Activated CD4-positive, alpha-beta T cell treated with anti-CD3 and anti-CD28 coated beads, Interleukin-2, amount 10 ng/mL, durations not matched to agents 24 days and 14 days (primary cell): ENCODE measurements at regions of chr7 and their contacts with region 1.

Region 1: GRCh38 chr7:145036604-145037405 is 201.0 kb upstream of the TPK1 start:
- DNase-seq: peak; percentile 77
- H3K4me3 Mint-ChIP-seq: no peak overlapping the region
- H3K27ac Mint-ChIP-seq: no peak overlapping the region
- H3K4me1 Mint-ChIP-seq: peaks cover 2% of the 10 kb centered on the region
- H3K27me3 Mint-ChIP-seq: peaks cover 2% of the 10 kb centered on the region

Region 2: DNA sequence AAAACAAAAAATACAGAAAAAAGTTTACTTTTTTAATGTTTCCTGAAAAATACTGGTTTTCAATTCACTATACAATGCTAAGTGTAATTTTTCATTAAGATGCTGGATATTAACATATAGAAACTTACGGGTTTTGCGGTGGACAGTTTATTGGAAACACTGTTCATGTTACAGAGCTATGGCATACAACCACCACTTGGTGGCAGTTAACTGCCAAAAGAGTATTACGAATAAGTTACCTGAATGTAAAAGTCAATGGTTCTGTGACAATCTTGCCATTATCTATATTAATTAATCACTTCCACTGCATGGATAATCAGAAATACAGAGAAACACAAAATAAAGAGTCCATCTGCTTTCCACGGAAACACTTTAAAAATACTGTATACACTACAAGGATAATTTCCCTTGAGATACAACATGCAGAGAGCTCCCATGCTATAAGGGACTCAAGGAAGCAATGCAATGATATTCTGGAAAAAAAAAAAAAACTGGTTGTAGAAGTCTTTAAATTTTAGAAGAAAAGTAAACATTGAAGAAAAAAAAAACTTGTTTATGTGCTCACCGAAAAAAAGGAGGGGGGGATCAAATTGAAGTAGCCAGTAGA is 298.0 kb before region 1 on chr7:
- intact Hi-C with region 1: loop called (anchors 10 kb)
- DNase-seq: peak; percentile 72
- H3K4me3 Mint-ChIP-seq: no peak overlapping the region
- H3K27ac Mint-ChIP-seq: no peak overlapping the region
- H3K4me1 Mint-ChIP-seq: peaks cover 2% of the 10 kb centered on the region
- H3K27me3 Mint-ChIP-seq: no peaks in the 10 kb centered on the region

Region 3: GRCh38 chr7:146090023-146090645 is 1053.3 kb after region 1 on chr7:
- intact Hi-C with region 1: loop called (anchors 10 kb)
- DNase-seq: no peak
- H3K4me3 Mint-ChIP-seq: no peak overlapping the region
- H3K27ac Mint-ChIP-seq: no peak overlapping the region
- H3K4me1 Mint-ChIP-seq: no peaks in the 10 kb centered on the region
- H3K27me3 Mint-ChIP-seq: no peaks in the 10 kb centered on the region